AG04449 (cell line): ENCODE measurements at regions of chr1 and their contacts with region 1.

Region 1: GRCh38 chr1:212455803-212456528 is 23.2 kb downstream of the NENF start:
- DNase-seq: peak; percentile 47
- H3K4me3 ChIP-seq: peak overlapping the region; percentile 20; the same call in 1 of the 2 replicates
- CTCF ChIP-seq: peak; percentile 92

Region 2: DNA sequence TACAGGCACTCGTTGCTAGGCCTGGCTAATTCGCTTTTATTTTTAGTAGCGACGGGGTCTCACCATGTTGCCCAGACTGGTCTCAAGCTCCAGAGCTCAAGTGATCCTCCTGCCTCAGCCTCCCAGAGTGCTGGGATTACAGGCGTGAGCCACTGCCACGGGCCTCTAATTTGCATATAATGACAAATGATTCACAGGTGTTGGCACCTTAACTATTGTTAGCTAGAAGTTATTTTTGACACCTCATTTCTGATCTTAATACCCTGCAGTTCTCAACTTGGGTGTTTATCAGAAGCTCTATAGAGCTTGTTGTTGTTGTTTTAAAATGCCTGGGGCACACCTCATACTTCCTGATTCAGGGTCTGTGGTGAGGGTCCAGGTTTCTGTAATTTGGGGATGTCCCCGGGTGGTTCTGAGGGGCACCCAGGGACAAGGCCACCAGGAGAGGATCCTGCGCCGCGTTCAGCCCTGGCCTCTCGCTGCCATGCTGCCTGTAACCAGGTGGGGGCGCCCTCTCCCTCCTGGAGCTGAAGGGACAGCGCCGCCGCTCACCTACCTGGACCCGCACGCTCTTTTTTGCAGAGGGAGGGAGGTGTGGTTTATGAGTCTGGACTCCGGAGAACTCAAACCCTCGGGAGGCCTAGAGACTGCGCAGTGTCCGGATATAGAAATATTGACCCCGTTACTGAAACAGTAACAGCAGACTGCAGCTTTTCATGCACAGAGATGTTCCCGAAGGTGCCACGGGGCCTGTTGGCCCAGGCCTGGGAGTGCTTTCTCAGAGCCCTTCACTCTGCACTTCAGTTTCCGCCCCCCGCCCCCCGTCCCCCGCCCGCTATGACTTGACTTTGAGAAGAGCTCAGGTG is 757.6 kb before region 1 on chr1:
- CTCF ChIA-PET with region 1: interaction called, 23 read pairs
- POLR2A ChIA-PET with region 1: interaction called, 3 read pairs
- DNase-seq: no peak
- H3K4me3 ChIP-seq: peak overlapping the region; percentile 6; the same call in 1 of the 2 replicates
- CTCF ChIP-seq: peak; percentile 99

Region 3: GRCh38 chr1:212070720-212071302 is 385.2 kb before region 1 on chr1:
- CTCF ChIA-PET with region 1: interaction called, 279 read pairs
- POLR2A ChIA-PET with region 1: no interaction called
- DNase-seq: no peak
- H3K4me3 ChIP-seq: no peak overlapping the region
- CTCF ChIP-seq: peak; percentile 53

Region 4: DNA sequence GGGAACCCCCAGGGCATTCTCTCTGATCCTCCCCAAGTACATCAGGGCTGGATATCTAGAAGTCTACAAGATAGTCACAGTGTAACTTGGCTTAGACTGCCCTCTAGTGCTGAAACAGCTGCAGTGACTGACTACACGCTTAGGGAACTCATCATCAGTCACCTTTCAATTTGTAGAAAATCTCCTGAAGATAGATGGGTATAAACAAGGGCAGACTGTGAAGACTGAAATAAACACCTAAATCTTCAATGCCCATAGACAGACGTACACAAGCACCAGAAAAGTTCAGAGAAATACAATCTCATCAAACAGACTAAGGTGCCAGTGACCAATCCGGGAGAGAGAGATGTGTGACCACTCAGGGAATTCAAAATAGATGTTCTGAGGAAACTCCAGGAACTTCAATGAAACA is 87.9 kb before region 1 on chr1:
- CTCF ChIA-PET with region 1: interaction called, 44 read pairs
- POLR2A ChIA-PET with region 1: no interaction called
- DNase-seq: peak; percentile 23
- H3K4me3 ChIP-seq: no peak overlapping the region
- CTCF ChIP-seq: peak; percentile 81

Region 5: GRCh38 chr1:212469701-212470458 is 13.9 kb after region 1 on chr1:
- CTCF ChIA-PET with region 1: interaction called, 139 read pairs
- POLR2A ChIA-PET with region 1: no interaction called
- DNase-seq: peak; percentile 42
- H3K4me3 ChIP-seq: no peak overlapping the region
- CTCF ChIP-seq: no peak

Region 6: GRCh38 chr1:212994926-212995325 is 539.0 kb after region 1 on chr1:
- CTCF ChIA-PET with region 1: interaction called, 10 read pairs
- POLR2A ChIA-PET with region 1: no interaction called
- DNase-seq: no peak
- H3K4me3 ChIP-seq: no peak overlapping the region
- CTCF ChIP-seq: no peak